Heart right ventricle (tissue), 16 donors: ENCODE measurements at regions of chr15 and their contacts with region 1.

Region 1: GRCh38 chr15:69160141-69160993 is at the start of gene GLCE:
- DNase-seq: peak; percentile 95 to 97
- ATAC-seq: peak; percentile 97 to 100 (median 99)
- H3K4me3 ChIP-seq: peak within 1 kb of the TSS; percentile 71 to 97 (median 76)
- H3K27ac ChIP-seq: peak within 1 kb of the TSS in 9 of 10 donors; percentile 75 to 92 (median 84)
- H3K4me1 ChIP-seq: peaks cover 0 to 27% (median 11%) of the 10 kb centered on the region in 9 donors
- H3K27me3 ChIP-seq: no peaks in the 10 kb centered on the region
- CTCF ChIP-seq: no peak
- total RNA-seq, gene GLCE: 6.0 to 13.3 (median 8.6) TPM

Region 2: DNA sequence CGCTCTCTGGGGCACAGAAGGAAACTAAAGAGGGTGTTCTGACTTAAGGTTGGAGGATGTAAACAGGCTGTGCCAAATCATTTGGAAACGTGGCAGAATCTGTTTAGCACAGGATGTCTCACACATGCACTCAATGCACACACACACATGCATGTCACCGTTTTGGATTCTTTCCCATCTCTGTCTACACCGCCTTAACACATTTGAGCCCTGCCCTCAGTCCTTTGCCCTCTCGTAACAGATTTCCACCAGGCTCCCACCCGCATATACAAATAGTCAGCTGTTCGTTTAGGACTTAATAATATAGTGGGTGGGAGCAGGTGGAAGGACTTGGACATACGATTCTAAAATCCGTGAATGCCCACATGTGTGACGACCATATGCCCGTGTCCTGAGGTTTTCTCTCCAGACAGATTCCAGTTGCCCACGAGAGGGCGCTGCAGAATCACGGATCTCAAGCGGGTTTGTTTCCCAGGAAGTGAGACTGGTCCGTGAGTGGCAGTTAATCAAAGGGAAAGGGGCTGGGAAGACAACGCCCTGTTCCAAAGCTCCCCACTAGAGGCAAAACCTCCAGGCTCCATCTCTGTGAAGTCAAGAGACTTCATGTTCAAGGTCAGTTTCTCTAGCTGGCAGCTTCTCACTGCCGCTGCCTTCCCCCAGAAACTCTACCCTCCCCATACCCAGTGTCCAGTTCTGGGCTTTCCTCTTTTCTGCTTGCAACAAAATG is 101.4 kb before region 1 on chr15:
- intact Hi-C with region 1: loop called in 4 of 10 experiments (anchors 5 kb)
- DNase-seq: peak; percentile 89 to 90
- ATAC-seq: peak; percentile 77 to 96 (median 86)
- H3K4me3 ChIP-seq: peak overlapping the region in 3 of 10 donors; percentile 23 to 30 (median 29)
- H3K27ac ChIP-seq: peak overlapping the region in 8 of 10 donors; percentile 20 to 75 (median 68)
- H3K4me1 ChIP-seq: peaks cover 0 to 27% (median 23%) of the 10 kb centered on the region in 9 donors
- H3K27me3 ChIP-seq: peaks cover 0 to 10% (median 0%) of the 10 kb centered on the region in 7 donors
- CTCF ChIP-seq: peak; percentile 76 to 95 (median 90)

Region 3: DNA sequence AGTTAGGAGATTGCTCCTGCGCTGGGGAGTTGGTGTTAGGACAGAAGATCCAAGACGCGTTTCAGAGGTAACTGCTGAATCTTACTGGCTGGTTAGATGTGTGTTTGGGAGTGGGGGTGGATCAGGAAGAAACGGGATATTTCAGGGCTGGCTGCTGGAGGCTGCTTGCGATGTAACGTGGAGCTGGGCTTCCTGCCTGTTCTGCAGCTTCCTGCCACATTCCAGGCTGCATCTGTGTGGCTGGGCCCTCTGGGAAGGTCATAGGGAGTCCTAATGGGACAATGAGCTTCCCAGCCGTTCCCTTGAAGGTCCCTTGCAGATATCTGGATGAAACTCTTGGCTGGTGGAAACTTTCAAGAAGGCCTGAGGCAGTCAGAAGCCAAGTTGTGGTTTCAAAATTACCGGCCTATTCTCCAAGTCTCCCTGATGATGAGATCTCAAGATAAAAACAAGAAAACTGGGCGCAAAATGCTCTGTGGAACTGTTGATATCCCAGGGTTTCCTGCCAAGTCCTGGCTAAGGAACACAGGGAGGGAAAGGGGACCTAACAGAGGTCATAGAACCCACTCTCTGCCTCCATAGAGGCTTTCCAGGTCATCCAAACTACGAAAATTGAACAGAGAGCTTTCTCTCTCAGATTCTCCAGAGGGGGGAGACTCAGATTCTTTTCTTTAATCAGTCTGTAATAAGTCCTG is 78.9 kb before region 1 on chr15:
- intact Hi-C with region 1: loop called in 3 of 10 experiments (anchors 5 to 10 kb)
- DNase-seq: peak; percentile 76 to 81
- ATAC-seq: peak; percentile 80 to 91 (median 84)
- H3K4me3 ChIP-seq: peak overlapping the region in 2 of 10 donors; percentile 11 to 13
- H3K27ac ChIP-seq: peak overlapping the region; percentile 42 to 94 (median 77)
- H3K4me1 ChIP-seq: peaks cover 7 to 55% (median 42%) of the 10 kb centered on the region in 9 donors
- H3K27me3 ChIP-seq: no peaks in the 10 kb centered on the region
- CTCF ChIP-seq: peak in 1 of 9 donors; percentile 32

Region 4: GRCh38 chr15:69225355-69226025 is 65.1 kb after region 1 on chr15:
- intact Hi-C with region 1: loop called in 4 of 10 experiments (anchors 2 to 10 kb)
- DNase-seq: no peak
- ATAC-seq: peak in 1 of 8 donors; percentile 42
- H3K4me3 ChIP-seq: no peak overlapping the region
- H3K27ac ChIP-seq: no peak overlapping the region
- H3K4me1 ChIP-seq: peaks cover 0 to 19% (median 0%) of the 10 kb centered on the region in 9 donors
- H3K27me3 ChIP-seq: no peaks in the 10 kb centered on the region
- CTCF ChIP-seq: peak in 8 of 9 donors; percentile 15 to 57 (median 38)

Region 5: GRCh38 chr15:69394556-69395282 is 234.4 kb after region 1 on chr15:
- intact Hi-C with region 1: loop called in 4 of 10 experiments (anchors 5 to 10 kb)
- DNase-seq: peak; percentile 81 to 87
- ATAC-seq: peak; percentile 88 to 93 (median 91)
- H3K4me3 ChIP-seq: peak overlapping the region in 3 of 10 donors; percentile 10 to 24 (median 16)
- H3K27ac ChIP-seq: no peak overlapping the region
- H3K4me1 ChIP-seq: peaks cover 0 to 14% (median 9%) of the 10 kb centered on the region in 9 donors
- H3K27me3 ChIP-seq: peaks cover 0 to 13% (median 0%) of the 10 kb centered on the region in 7 donors
- CTCF ChIP-seq: peak; percentile 94 to 99 (median 97)